ENCODE measurements at regions of chr20 and their contacts with region 1.

Region 1: DNA sequence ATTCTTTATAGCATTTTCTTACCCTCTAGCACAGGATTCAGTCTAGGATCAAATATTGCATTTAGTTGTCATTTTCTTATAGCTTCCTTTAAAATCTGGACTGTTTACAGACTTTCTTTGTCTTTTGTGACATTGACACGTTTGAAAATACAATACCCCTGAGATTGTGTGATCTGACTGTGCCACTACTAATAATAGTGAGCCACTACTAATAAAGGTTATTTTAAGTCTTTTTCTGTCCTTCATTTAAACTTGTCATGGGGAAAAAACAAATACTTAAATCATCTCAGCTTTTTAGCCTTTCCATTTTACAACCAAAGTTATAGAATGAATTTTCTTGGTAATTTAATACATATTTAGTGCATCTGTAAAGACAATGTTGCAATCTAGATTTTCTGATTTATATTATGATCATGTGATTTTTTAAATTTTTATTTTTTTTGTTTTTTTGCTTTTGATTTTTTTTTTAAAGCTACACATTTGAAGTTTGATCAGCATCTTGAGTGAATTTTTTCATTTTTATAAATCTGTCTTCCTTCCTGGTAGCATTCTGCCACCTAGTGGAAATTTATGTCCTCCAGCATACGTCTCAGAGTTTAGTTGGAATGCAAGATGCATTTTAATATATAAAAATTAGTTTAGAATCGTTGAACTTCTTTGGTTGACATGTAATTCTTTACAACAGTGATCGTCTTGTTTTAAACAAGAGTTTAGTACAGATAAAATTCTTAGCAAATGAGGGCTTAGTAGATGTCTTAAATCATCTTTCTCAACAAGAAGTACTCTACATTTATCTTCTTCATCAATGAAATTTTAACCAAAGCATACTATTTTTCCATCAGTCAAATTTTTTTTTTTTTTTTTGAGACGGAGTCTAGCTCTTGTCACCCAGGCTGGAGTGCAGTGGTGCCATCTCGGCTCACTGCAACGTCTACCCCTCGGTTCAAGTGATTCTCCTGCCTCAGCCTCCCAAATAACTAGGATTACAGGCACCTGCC is 119.4 kb downstream of the NCOA3 start:
- DNase-seq: no peak
- H3K4me3 ChIP-seq: no peak overlapping the region
- H3K27ac ChIP-seq: no peak overlapping the region
- H3K4me1 ChIP-seq: peaks cover 0 to 6% (median 3%) of the 10 kb centered on the region in 4 donors
- H3K27me3 ChIP-seq: no peaks in the 10 kb centered on the region
- CTCF ChIP-seq: peak; percentile 79 to 88 (median 86)
- EP300 ChIP-seq: no peak
- POLR2A ChIP-seq: no peak

Region 2: GRCh38 chr20:46757754-46758678 is 863.1 kb before region 1 on chr20:
- intact Hi-C with region 1: loop called (anchors 10 kb)
- DNase-seq: no peak
- H3K4me3 ChIP-seq: no peak overlapping the region
- H3K27ac ChIP-seq: no peak overlapping the region
- H3K4me1 ChIP-seq: peaks cover 0 to 8% (median 5%) of the 10 kb centered on the region in 4 donors
- H3K27me3 ChIP-seq: peaks cover 0 to 6% (median 0%) of the 10 kb centered on the region in 4 donors
- CTCF ChIP-seq: peak in 2 of 3 experiments; percentile 85 to 95
- EP300 ChIP-seq: no peak
- POLR2A ChIP-seq: no peak

Region 3: DNA sequence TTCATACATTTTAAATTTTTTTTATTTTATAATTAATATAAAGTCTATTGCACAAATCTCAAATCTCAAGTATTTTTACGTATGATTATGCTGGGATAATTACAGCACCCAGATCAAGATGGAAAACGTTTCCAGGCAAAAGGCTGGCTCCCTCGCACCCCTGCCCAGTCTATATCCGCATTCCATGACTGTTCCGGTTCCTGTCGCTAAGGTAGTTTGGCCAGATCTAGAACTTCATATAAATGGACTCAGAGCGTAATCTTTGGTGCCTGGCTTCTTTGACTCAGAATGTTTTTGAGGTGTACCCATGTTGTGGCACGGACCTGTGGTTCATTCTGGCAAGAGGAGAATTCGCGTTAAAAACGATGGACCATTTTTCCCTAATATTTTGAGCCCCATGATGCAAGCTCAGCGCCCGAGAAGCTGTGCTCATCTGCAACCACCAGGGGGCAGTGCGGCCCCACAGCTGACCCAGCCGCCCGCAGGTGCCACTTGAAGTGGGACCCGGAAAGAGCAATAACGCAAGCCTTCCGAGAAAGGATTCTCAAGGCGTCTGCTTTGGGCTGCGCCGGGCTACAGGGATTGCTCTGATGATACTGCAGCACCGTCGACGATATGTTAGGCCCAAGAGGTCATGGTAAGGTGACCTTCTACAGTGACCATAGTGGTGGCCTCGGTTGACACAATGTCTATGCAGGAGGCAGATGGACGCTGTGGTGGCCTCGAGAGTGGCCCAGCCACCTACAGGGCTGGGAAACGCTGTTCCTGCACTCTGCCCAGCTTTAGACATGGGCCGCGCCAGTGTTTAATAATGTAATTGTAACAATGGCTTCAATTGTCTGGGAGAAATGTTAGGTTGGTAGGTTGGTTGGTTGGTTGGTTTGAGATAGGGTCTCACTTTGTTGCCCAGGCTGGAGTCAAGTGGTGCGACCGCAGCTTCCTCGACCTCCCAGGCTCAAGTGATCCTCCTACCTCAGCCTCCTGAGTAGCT is 424.7 kb before region 1 on chr20:
- intact Hi-C with region 1: loop called (anchors 2 kb)
- DNase-seq: peak; percentile 93
- H3K4me3 ChIP-seq: no peak overlapping the region
- H3K27ac ChIP-seq: no peak overlapping the region
- H3K4me1 ChIP-seq: peaks cover 8 to 12% (median 10%) of the 10 kb centered on the region in 4 donors
- H3K27me3 ChIP-seq: no peaks in the 10 kb centered on the region
- CTCF ChIP-seq: peak in 2 of 3 experiments; percentile 94
- EP300 ChIP-seq: no peak
- POLR2A ChIP-seq: no peak

Region 4: GRCh38 chr20:47389867-47390347 is 231.2 kb before region 1 on chr20:
- intact Hi-C with region 1: loop called (anchors 2 kb)
- DNase-seq: no peak
- H3K4me3 ChIP-seq: no peak overlapping the region
- H3K27ac ChIP-seq: no peak overlapping the region
- H3K4me1 ChIP-seq: peaks cover 0 to 2% (median under 1%) of the 10 kb centered on the region in 4 donors
- H3K27me3 ChIP-seq: no peaks in the 10 kb centered on the region
- CTCF ChIP-seq: no peak
- EP300 ChIP-seq: no peak
- POLR2A ChIP-seq: no peak

Region 5: GRCh38 chr20:47540443-47541354 is 80.4 kb before region 1 on chr20:
- intact Hi-C with region 1: no loop called
- DNase-seq: no peak
- H3K4me3 ChIP-seq: no peak overlapping the region
- H3K27ac ChIP-seq: no peak overlapping the region
- H3K4me1 ChIP-seq: peaks cover 30 to 55% (median 41%) of the 10 kb centered on the region in 4 donors
- H3K27me3 ChIP-seq: no peaks in the 10 kb centered on the region
- CTCF ChIP-seq: no peak
- EP300 ChIP-seq: no peak
- POLR2A ChIP-seq: no peak

Region 6: GRCh38 chr20:47663333-47664067 is 42.4 kb after region 1 on chr20:
- intact Hi-C with region 1: no loop called
- DNase-seq: no peak
- H3K4me3 ChIP-seq: no peak overlapping the region
- H3K27ac ChIP-seq: peak overlapping the region in 2 of 4 donors; percentile 12 to 31
- H3K4me1 ChIP-seq: peaks cover 12 to 34% (median 18%) of the 10 kb centered on the region in 4 donors
- H3K27me3 ChIP-seq: no peaks in the 10 kb centered on the region
- CTCF ChIP-seq: peak; percentile 95 to 98 (median 96)
- EP300 ChIP-seq: no peak
- POLR2A ChIP-seq: no peak

Region 7: GRCh38 chr20:47725248-47725973 is 104.3 kb after region 1 on chr20:
- intact Hi-C with region 1: no loop called
- DNase-seq: peak; percentile 95
- H3K4me3 ChIP-seq: no peak overlapping the region
- H3K27ac ChIP-seq: no peak overlapping the region
- H3K4me1 ChIP-seq: peaks cover 4 to 39% (median 36%) of the 10 kb centered on the region in 4 donors
- H3K27me3 ChIP-seq: no peaks in the 10 kb centered on the region
- CTCF ChIP-seq: peak; percentile 89 to 94 (median 92)
- EP300 ChIP-seq: no peak
- POLR2A ChIP-seq: no peak

Region 8: DNA sequence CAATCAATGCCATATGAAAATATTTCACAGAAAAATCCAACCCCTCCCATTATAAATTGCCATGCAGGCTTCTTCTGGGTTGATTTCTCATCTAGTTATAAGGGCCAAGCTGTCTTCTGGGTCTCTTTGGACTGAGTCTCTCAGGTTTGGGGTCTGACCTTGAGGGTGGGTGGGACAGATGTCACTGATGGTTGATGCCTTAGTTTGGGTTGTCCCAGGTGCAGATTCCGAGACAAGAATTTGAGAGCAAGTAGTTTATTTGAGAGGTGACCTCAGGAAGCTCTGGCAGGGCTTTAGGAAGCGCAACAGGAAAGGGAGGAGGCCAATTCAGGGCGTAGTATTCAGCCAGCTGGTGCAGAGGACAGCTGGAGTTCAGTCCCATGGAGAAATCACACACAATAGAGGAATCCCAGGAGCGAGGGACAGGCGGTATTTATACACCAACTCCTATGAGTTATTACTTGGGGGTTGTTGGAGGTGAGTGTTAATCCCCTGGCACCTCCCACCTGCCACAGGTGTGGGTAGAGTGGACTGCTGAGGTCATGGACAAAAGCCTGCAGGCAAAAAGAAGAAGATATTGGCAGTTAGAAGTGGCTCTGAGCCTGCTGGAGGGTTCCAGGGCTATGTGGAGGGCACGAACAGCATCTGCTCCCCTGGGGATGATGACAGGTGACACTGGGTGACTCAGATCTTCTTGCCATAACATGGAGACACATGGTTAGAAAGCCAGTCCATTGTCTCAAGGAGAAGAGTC is 178.0 kb after region 1 on chr20:
- intact Hi-C with region 1: no loop called
- DNase-seq: no peak
- H3K4me3 ChIP-seq: no peak overlapping the region
- H3K27ac ChIP-seq: no peak overlapping the region
- H3K4me1 ChIP-seq: peaks cover 9 to 30% (median 15%) of the 10 kb centered on the region in 4 donors
- H3K27me3 ChIP-seq: no peaks in the 10 kb centered on the region
- CTCF ChIP-seq: no peak
- EP300 ChIP-seq: no peak
- POLR2A ChIP-seq: no peak